Dorsolateral prefrontal cortex (tissue), 120 donors: ENCODE measurements at regions of chr5 and their contacts with region 1.

Region 1: GRCh38 chr5:32076699-32077695 is 97.1 kb downstream of the GOLPH3 start:
- DNase-seq: peak in 3 of 10 donors; percentile 38 to 68 (median 61)
- H3K4me3 ChIP-seq: no peak overlapping the region
- H3K27ac ChIP-seq: no peak overlapping the region
- H3K27me3 ChIP-seq: no peaks in the 10 kb centered on the region
- CTCF ChIP-seq: peak; percentile 61 to 95 (median 82)

Region 2: DNA sequence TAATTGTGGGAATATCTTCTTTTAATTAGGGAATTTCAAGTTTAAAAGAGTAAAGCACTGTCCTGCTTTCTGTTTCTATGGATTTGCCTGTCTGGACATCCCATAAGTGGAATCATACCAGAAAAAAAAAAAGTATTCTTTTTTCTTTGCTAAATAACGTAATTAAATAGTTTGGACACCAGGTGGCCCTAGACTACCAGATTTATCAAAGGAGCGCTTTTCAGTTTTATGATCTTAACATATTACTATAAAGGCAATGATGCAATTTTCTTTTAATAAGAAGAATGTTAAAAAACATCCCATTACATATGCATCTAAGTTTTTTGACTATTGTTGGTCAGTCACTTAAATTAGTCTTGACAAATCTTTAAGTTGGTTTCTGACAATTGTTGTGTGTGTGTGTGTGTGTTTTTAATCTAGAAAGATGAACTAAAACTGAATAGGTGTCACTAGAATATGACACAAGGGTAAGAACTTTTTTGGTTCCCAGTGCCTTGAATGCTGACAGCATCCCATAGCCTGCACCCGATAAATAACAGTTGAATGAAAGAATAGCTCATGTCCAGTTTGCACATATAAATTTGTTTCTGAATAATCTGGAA is 495.4 kb before region 1 on chr5:
- intact Hi-C with region 1: loop called in 1 of 2 experiments (anchors 5 kb)
- DNase-seq: no peak
- H3K4me3 ChIP-seq: no peak overlapping the region
- H3K27ac ChIP-seq: no peak overlapping the region
- H3K27me3 ChIP-seq: no peaks in the 10 kb centered on the region
- CTCF ChIP-seq: peak; percentile 54 to 90 (median 70)

Region 3: DNA sequence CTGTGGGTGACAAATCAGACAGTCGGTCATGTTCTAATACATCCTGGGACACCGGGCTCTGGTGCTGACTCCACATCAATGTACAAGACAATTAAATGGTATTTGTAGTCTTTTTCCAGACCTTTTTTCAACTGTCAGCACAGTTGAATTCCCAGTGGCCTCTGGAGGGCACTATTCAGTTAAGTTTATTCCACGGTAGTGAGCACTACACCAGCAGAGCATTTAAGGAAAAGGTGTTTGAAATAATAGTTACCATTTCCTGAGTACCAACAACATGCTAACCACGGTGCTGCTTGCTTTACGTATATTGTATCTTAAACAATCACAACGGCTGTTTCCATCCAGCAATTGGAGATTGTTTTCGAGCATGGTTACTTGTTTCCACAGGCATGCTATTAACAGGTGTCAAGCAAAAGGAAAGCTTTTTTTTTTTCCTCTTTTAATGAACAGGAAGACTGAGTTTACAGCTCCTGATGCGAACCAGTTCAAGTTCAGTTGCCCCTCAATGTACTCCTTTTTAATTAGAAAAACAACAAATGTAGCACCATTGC is 251.4 kb before region 1 on chr5:
- intact Hi-C with region 1: loop called (anchors 2 to 5 kb)
- DNase-seq: peak in 5 of 10 donors; percentile 20 to 66 (median 41)
- H3K4me3 ChIP-seq: no peak overlapping the region
- H3K27ac ChIP-seq: peak overlapping the region in 3 of 59 donors; percentile 27 to 51 (median 34)
- H3K27me3 ChIP-seq: no peaks in the 10 kb centered on the region
- CTCF ChIP-seq: peak; percentile 48 to 91 (median 79)

Region 4: GRCh38 chr5:31921852-31922305 is 155.1 kb before region 1 on chr5:
- intact Hi-C with region 1: loop called in 1 of 2 experiments (anchors 5 kb)
- DNase-seq: no peak
- H3K4me3 ChIP-seq: no peak overlapping the region
- H3K27ac ChIP-seq: no peak overlapping the region
- H3K27me3 ChIP-seq: no peaks in the 10 kb centered on the region
- CTCF ChIP-seq: no peak

Region 5: GRCh38 chr5:31934156-31934555 is 142.8 kb before region 1 on chr5:
- intact Hi-C with region 1: loop called (anchors 2 to 5 kb)
- DNase-seq: no peak
- H3K4me3 ChIP-seq: no peak overlapping the region
- H3K27ac ChIP-seq: no peak overlapping the region
- H3K27me3 ChIP-seq: no peaks in the 10 kb centered on the region
- CTCF ChIP-seq: no peak

Region 6: DNA sequence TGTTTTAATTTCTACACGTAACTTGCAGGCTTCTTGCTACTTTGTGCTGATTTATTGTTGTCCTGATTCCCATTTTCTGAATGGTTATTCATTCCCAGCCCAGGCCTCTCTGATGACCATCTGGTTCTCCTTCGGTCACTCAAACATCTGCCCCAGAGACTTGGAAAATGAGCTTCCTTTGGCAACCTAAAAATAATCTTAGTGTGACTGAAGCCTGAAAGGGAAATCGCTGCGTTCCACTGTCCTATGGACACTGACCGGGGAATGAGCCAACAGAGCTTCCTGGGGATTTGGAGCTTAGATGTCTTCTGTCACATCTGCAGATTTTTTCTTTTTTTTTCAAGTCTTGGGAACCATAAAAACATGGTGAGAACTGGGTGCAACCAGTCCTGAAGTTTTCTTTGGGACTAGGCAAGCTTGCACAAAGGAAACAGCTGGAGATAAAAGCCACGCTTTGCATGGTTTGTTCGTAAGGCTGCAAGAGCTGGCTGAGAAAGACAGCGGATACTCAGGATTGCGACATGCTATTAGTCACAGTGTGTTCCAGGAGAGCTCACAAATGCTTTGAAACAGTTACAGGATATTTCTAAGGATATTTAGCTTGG is 49.2 kb before region 1 on chr5:
- intact Hi-C with region 1: loop called in 1 of 2 experiments (anchors 2 kb)
- DNase-seq: peak in 2 of 10 donors; percentile 43 to 57
- H3K4me3 ChIP-seq: peak overlapping the region in 46 of 59 donors; percentile 0 to 53 (median 26)
- H3K27ac ChIP-seq: peak overlapping the region; percentile 27 to 96 (median 85)
- H3K27me3 ChIP-seq: no peaks in the 10 kb centered on the region
- CTCF ChIP-seq: no peak

Region 7: DNA sequence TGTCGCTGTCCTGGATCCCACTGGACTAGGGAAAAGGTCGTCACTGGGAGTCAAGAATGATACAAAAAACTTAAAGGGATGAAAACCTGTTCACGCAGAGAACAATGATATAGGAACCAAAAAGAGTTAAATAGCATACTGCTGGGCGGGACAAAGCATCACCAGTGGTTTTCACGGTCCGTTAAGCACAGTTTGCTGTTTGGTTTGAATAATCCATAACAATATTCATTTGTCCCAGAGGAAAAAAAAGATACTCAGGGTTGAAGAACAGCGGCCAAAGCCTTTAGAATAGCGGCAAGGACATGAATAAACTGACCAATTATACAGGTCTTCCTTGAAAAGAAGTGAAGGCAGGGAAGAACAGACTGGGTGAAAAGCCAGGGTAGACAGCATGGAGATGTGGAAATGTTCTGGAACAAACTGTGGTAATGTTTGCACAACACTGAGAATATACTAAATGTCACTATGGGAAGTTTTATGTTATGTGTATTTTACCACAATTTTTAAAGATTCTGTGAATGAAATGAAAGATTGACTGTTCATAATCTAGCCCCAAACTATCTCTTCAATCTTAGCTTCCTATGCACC is 175.0 kb after region 1 on chr5:
- intact Hi-C with region 1: no loop called
- DNase-seq: no peak
- H3K4me3 ChIP-seq: no peak overlapping the region
- H3K27ac ChIP-seq: peak overlapping the region in 8 of 59 donors; percentile 0 to 38 (median 10)
- H3K27me3 ChIP-seq: no peaks in the 10 kb centered on the region
- CTCF ChIP-seq: no peak